Left cardiac atrium (tissue), 4 donors: ENCODE measurements at regions of chr11 and their contacts with region 1.

Region 1: GRCh38 chr11:1546536-1547400 is 25.3 kb downstream of the DUSP8 start:
- DNase-seq: peak; percentile 58
- ATAC-seq: peak; percentile 72 to 74

Region 2: DNA sequence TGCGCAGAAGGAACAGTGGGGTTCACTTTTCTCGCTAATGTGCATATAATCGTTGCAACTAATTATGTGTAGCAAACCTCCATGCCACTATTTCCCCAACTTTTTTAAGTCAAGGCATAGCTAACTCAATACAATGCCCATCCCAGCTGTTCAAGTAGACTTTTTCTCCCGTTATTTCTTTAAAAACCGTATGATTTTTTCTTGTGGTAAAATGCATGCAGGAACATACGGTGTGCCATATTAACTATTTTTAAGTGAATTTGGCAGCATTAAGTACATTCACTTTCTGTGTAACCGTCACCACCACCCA is 28.1 kb after region 1 on chr11:
- intact Hi-C with region 1: loop called in 1 of 2 experiments (anchors 1 kb)
- DNase-seq: no peak
- ATAC-seq: no peak

Region 3: GRCh38 chr11:1628506-1629325 is 81.9 kb after region 1 on chr11:
- intact Hi-C with region 1: loop called in 1 of 2 experiments (anchors 5 kb)
- DNase-seq: peak; percentile 58
- ATAC-seq: peak; percentile 67 to 90